T-cell (primary cell): ENCODE measurements at regions of chr7 and their contacts with region 1.

Region 1: GRCh38 chr7:43700059-43700501 is 29.2 kb downstream of the COA1 start:
- DNase-seq: peak in 2 of 35 experiments; percentile 8 to 77
- ATAC-seq: peak; percentile 64 to 73 (median 67)
- H3K4me3 ChIP-seq: no peak overlapping the region
- H3K4me3 Mint-ChIP-seq: peak overlapping the region in 2 of 3 donors; percentile 46 to 52
- H3K27ac ChIP-seq: no peak overlapping the region
- H3K27ac Mint-ChIP-seq: peak overlapping the region; percentile 36 to 79
- H3K4me1 ChIP-seq: peaks cover 12 to 26% of the 10 kb centered on the region in 2 experiments
- H3K4me1 Mint-ChIP-seq: peaks cover 47 to 49% (median 48%) of the 10 kb centered on the region in 3 donors
- H3K27me3 ChIP-seq: no peaks in the 10 kb centered on the region
- H3K27me3 Mint-ChIP-seq: no peaks in the 10 kb centered on the region

Region 2: GRCh38 chr7:43572516-43573049 is 127.5 kb before region 1 on chr7:
- CTCF ChIA-PET with region 1: interaction called, 11 to 18 read pairs
- POLR2A ChIA-PET with region 1: no interaction called
- DNase-seq: peak in 4 of 35 experiments; percentile 10 to 35 (median 24)
- ATAC-seq: peak; percentile 74 to 89 (median 80)
- H3K4me3 ChIP-seq: no peak overlapping the region
- H3K4me3 Mint-ChIP-seq: no peak overlapping the region
- H3K27ac ChIP-seq: no peak overlapping the region
- H3K27ac Mint-ChIP-seq: peak overlapping the region in 1 of 2 donors; percentile 8
- H3K4me1 ChIP-seq: peaks cover 0 to 2% of the 10 kb centered on the region in 2 experiments
- H3K4me1 Mint-ChIP-seq: peaks cover 2 to 7% (median 6%) of the 10 kb centered on the region in 3 donors
- H3K27me3 ChIP-seq: no peaks in the 10 kb centered on the region
- H3K27me3 Mint-ChIP-seq: no peaks in the 10 kb centered on the region

Region 3: GRCh38 chr7:43602271-43602670 is 97.8 kb before region 1 on chr7:
- CTCF ChIA-PET with region 1: interaction called, 5 to 34 read pairs
- POLR2A ChIA-PET with region 1: interaction called, 4 to 8 read pairs
- DNase-seq: no peak
- ATAC-seq: no peak
- H3K4me3 ChIP-seq: no peak overlapping the region
- H3K4me3 Mint-ChIP-seq: no peak overlapping the region
- H3K27ac ChIP-seq: no peak overlapping the region
- H3K27ac Mint-ChIP-seq: no peak overlapping the region
- H3K4me1 ChIP-seq: peaks cover 52 to 53% of the 10 kb centered on the region in 2 experiments
- H3K4me1 Mint-ChIP-seq: peaks cover 49 to 51% (median 50%) of the 10 kb centered on the region in 3 donors
- H3K27me3 ChIP-seq: no peaks in the 10 kb centered on the region
- H3K27me3 Mint-ChIP-seq: no peaks in the 10 kb centered on the region

Region 4: DNA sequence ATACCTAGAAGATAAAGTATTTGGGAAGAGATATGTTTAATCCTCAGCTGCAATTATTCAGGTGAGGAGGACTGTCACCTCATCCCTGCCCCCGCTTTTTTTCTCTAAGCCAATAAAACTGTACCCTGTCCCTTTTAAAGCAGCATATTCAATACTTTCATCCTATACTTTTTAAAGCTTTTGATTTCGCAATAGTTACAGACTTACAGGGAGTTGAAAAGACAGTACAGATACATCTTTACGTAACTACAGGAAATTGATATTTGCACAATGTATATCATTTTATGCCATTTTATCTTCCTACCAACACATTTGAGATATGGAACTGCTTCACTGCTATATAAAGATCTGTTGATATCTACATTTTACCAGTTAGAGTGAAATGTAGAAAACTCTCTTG is 69.6 kb before region 1 on chr7:
- CTCF ChIA-PET with region 1: interaction called in 1 of 2 experiments, 17 read pairs
- POLR2A ChIA-PET with region 1: interaction called, 3 read pairs
- DNase-seq: no peak
- ATAC-seq: no peak
- H3K4me3 ChIP-seq: no peak overlapping the region
- H3K4me3 Mint-ChIP-seq: peak overlapping the region in 2 of 3 donors; percentile 10 to 74
- H3K27ac ChIP-seq: peak overlapping the region; percentile 65
- H3K27ac Mint-ChIP-seq: peak overlapping the region; percentile 87 to 96
- H3K4me1 ChIP-seq: peaks cover 56 to 76% of the 10 kb centered on the region in 2 experiments
- H3K4me1 Mint-ChIP-seq: peaks cover 93% of the 10 kb centered on the region in 3 donors
- H3K27me3 ChIP-seq: no peaks in the 10 kb centered on the region
- H3K27me3 Mint-ChIP-seq: no peaks in the 10 kb centered on the region

Region 5: DNA sequence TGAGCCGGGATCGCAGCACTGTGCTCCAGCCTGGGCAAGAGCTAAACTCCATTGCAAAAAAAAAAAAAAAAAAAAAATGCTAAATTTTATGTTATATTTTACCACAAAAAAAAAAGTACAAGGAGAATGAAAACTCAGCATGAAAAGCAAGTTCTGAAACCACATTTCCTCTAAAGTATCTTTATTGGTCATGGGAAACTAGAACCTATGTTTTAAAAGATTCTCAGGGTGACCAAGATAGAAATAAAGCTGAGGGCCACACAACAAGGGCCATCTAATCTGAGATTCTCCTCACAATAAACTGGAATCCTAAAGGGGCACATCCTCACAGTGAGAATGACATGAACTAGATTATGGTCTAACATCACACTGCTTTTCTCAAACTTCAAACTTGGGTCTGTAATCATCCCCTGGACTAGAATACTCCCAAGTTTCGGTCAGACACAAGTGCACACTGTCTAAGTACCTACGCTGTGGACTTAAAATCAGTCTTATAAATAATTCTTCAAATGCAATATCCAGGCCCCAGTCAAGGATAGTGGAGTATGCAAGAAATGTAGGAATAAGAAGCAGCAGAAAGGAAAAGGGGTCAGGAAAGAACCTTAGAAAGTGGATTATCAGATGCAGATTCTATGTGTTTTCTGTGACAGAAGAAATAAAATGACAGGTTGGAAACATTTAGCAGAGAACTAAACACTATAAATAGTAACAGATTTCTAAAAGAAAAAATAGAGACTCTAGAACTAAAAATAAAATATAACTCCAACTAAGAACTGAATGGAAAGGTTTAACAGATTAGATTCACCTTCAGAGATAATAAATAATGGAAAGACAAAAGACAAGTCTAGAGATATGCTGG is 20.6 kb before region 1 on chr7:
- CTCF ChIA-PET with region 1: interaction called, 3 to 12 read pairs
- POLR2A ChIA-PET with region 1: interaction called in 1 of 2 experiments, 5 read pairs
- DNase-seq: peak in 1 of 35 experiments; percentile 14
- ATAC-seq: peak in 2 of 4 experiments; percentile 32 to 52
- H3K4me3 ChIP-seq: peak overlapping the region in 1 of 2 donors; percentile 44
- H3K4me3 Mint-ChIP-seq: peak overlapping the region in 1 of 3 donors; percentile 33
- H3K27ac ChIP-seq: peak overlapping the region; percentile 8
- H3K27ac Mint-ChIP-seq: peak overlapping the region; percentile 84 to 89
- H3K4me1 ChIP-seq: peaks cover 13 to 29% of the 10 kb centered on the region in 2 experiments
- H3K4me1 Mint-ChIP-seq: peaks cover 74 to 84% (median 83%) of the 10 kb centered on the region in 3 donors
- H3K27me3 ChIP-seq: no peaks in the 10 kb centered on the region
- H3K27me3 Mint-ChIP-seq: no peaks in the 10 kb centered on the region

Region 6: DNA sequence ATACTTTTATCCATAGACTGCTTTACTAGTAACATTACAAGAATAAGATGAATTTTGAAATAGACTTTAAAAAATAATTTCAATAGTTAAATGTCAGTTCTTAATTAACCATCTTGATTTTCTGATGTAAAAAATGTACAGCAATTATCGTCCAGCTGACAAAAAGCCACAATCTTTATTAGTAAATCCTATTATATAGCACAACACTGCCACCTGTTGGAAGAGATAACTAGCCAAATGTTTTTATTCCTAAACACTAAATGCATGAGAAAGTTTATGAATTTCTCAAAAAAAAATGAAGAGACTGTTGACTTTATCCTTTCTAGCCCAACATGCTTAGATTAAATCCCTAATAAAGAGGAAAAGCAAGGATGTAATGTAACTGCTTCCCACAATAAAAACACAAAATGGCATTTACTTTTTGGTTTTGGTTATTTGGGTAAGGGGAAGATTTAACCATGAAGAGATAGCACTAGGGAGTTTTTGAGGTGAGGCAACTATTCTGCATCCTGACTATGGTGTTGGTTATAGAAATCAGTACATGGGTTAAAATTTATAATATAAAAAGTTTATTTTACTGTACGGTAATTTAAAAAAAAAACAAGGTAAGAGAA is 21.2 kb after region 1 on chr7:
- CTCF ChIA-PET with region 1: interaction called, 9 to 19 read pairs
- POLR2A ChIA-PET with region 1: interaction called in 1 of 2 experiments, 3 read pairs
- DNase-seq: peak in 5 of 35 experiments; percentile 2 to 80 (median 15)
- ATAC-seq: peak in 1 of 4 experiments; percentile 31
- H3K4me3 ChIP-seq: no peak overlapping the region
- H3K4me3 Mint-ChIP-seq: no peak overlapping the region
- H3K27ac ChIP-seq: no peak overlapping the region
- H3K27ac Mint-ChIP-seq: peak overlapping the region in 1 of 2 donors; percentile 56
- H3K4me1 ChIP-seq: peaks cover 2 to 4% of the 10 kb centered on the region in 2 experiments
- H3K4me1 Mint-ChIP-seq: peaks cover 53 to 59% (median 53%) of the 10 kb centered on the region in 3 donors
- H3K27me3 ChIP-seq: no peaks in the 10 kb centered on the region
- H3K27me3 Mint-ChIP-seq: no peaks in the 10 kb centered on the region